BJ (cell line): ENCODE measurements at regions of chr10 and their contacts with region 1.

Region 1: DNA sequence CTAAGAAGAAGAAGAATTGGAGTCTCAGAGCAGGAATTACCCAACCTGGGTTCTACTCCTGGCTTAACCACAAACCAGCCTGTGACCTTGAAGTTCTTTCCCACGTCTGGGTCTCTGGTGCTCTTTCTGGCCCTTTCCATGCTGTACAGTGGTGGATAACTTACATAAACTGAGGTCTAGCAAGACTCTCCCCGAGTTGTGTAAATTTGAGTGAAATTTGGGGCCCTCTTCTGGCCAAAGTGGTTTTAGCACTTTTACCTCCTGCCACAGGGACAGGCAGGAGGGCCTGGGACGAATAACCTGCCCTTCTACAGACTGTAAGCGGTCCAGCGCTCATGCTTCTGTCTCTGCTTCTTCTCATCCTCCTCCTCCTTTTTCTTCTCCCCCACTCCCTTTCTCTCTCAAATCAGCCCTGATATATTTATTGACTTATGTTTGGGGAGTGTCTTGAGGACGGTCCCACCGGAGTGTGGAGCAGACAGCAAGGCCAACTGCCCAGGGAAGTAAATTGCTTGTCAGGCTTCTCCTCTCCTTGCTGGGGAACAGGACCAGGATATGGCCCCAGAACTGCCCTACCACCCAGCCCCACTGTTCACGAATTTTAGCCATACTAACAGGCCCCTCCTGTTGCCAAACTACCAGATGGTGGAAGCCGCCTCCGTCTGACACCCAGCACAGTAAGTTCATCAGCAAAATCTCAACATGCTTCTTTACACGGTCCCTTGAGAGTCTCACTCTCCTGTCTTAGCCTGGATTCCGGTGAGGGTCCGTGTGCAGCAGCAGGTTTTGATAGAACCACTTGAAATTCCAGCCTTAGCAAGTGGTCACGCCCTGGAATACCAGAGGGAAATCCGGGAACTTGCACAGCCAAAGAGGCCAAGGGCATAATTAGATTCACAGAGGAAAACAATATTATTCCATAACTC is 4.0 kb upstream of the SH3PXD2A start:
- DNase-seq: no peak
- H3K4me3 ChIP-seq: no peak overlapping the region
- H3K27me3 ChIP-seq: no peaks in the 10 kb centered on the region
- CTCF ChIP-seq: peak; percentile 71

Region 2: DNA sequence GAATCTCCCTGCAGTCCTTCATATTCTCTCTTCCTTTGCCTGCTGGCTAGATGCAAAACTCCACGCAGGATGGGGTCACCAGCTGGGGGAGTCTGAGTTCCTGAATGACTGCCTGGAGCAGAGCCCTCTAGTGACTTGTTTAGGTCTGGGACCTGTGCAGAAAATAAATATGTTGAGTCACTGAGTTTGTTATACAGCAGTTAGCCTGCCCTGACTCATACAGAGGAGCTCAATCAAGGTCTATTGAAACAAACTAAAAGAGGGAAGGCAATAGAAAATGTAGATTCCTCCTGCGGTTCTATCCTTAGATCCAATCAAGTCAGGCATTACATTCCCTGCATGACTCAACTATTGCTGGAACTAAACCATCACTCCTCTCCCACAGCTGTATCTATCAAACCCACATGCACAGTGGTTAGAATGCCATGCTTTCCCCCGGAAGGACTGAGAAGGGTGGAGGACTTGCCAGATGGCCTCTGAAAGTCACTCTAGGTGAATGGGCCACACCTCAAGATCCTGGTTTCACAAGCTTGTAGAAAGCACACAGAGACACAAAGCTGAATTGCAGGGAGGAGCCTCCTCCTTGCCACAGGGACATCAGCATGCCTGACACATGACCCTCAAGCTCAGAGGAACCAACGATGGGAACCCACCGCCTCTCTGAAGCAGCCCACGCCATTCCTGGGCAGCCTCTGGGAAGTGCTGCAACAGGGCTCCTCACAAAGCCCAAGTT is 77.9 kb before region 1 on chr10:
- CTCF ChIA-PET with region 1: interaction called, 10 read pairs
- POLR2A ChIA-PET with region 1: no interaction called
- DNase-seq: peak; percentile 99
- H3K4me3 ChIP-seq: no peak overlapping the region
- H3K27me3 ChIP-seq: no peaks in the 10 kb centered on the region
- CTCF ChIP-seq: peak; percentile 68

Region 3: GRCh38 chr10:103847909-103848468 is 11.4 kb before region 1 on chr10:
- CTCF ChIA-PET with region 1: interaction called, 10 read pairs
- POLR2A ChIA-PET with region 1: no interaction called
- DNase-seq: no peak
- H3K4me3 ChIP-seq: no peak overlapping the region
- H3K27me3 ChIP-seq: no peaks in the 10 kb centered on the region
- CTCF ChIP-seq: peak; percentile 34

Region 4: DNA sequence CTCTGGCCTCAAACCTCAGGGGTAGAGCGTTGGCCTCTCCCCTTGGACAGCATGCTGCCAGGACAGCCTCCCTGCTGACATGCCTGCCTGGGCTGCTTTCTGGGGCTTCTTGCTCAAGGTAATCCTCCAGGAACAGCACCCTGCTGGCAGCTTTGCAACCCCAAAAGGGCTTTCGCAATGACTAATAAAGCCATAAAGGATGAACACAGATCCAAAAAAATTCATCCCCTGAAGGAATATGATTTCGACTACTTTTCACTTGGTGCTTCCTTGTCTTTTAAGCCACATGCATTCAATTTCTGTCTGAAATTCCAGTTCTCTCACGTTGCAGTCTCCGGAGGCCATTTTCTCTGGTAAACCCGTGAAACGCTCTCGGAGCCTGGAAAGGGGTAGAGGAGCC is 11.1 kb after region 1 on chr10:
- CTCF ChIA-PET with region 1: interaction called, 12 read pairs
- POLR2A ChIA-PET with region 1: no interaction called
- DNase-seq: peak; percentile 81
- H3K4me3 ChIP-seq: no peak overlapping the region
- H3K27me3 ChIP-seq: no peaks in the 10 kb centered on the region
- CTCF ChIP-seq: peak; percentile 36

Region 5: DNA sequence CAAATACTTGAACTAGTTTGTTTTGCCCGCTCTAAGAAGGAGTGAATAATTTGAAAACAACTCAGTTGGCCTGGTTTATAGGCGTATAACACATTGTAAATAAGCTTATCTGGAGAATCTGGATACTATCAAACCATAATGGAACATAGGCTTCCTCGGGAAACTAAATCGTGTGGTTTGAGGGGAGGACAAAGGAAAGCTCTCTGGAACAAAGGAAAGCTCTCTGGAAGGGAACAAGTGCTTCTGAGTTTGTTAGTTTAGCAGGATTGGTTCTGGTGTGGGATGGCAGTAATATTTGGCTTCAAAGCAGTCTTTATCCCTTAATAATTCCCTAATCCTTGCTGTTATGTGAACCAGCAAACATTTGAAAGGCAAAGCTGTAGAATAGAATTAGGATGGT is 92.5 kb after region 1 on chr10:
- CTCF ChIA-PET with region 1: no interaction called
- POLR2A ChIA-PET with region 1: no interaction called
- DNase-seq: no peak
- H3K4me3 ChIP-seq: no peak overlapping the region
- H3K27me3 ChIP-seq: no peaks in the 10 kb centered on the region
- CTCF ChIP-seq: no peak